ENCODE measurements at regions of chr11 and their contacts with region 1.

Region 1: DNA sequence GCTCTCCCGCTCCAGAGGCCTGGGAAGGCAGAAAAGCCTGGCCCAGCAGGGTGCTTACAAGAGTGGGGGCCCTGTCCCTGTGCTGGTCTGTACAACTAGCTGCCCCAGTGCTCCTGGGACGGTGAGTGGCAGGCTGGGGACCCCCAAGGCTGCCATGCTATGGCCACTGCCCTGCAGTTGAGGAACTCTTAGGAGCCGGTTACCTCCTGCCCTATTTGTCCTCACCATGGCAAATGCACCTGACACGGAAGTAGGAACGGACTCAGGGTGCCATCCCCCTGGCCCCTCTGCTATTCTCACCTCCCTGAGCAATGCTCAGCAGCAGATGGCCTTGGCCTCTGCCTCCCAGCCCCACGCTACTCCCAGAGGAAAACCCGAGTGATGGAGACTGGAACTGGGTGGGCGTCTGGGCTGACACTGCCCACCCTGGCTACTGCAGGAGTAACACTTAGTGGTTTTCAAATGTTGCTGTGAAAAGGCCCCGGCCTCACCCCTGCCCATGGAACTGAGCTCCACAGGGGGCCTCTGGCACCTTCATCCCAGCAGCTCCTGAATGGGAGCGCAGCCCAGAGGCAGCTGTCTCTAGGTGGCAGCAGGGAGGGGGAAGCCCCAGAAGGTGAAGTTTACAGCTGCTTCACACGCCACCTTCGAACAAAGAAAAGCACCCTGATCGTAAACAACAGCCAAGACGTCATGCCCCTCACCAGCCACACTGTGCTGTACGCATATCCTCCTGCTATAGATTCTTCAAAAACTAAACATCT is 105.3 kb downstream of the CTTN start:
- DNase-seq: no peak
- H3K4me3 ChIP-seq: no peak overlapping the region
- H3K27ac ChIP-seq: no peak overlapping the region
- H3K4me1 ChIP-seq: peaks cover 0 to 10% (median 6%) of the 10 kb centered on the region in 4 experiments; a peak in 4 of 7 replicates
- H3K27me3 ChIP-seq: no peaks in the 10 kb centered on the region
- CTCF ChIP-seq: peak in 2 of 3 experiments; percentile 35 to 41; a peak in 3 of 4 replicates
- EP300 ChIP-seq: no peak
- POLR2A ChIP-seq: no peak
- RAD21 ChIP-seq: peak; percentile 37 to 50

Region 2: DNA sequence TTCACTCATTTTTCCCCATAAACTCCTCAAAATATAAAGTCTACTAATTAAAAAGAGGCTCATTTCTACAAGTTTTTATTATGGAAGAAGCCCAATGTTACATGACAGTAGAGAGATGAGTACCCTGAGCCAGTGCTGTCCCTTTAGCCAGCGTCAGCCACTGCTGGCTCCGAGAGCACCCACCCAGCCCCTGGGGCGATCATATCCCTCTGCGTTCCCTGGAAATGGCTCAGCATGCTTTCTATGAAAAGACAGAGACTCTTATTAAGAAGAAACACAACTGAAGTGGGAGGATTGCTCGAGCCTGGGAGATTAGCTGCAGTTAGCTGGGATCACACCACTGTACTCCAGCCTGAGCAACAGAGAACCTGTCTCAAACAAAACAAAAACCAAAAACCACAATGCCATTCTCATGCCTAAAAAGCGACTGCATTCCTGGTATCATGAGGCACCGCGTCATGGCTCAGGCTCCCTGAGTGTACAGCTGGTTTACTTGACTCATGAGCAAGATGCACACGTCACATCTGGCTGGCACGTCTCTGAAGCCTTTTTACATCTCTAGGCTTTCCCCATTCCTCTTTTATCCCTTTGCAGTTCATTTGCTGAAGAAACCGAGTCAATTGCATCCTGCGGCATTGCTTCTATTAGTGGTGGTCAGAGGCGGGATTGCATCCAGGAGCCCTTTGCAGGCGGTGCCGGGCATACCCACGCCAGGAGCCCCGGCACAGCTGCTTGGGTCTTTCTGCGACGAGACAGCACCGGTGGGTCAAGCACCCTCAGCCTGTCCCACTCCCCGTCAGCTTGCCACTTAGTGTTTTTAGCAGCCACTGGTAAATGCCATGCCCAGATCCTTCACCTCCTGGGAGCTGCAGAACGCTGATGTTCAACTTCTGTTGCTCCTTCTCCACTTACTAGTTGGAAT is 14.6 kb after region 1 on chr11:
- CTCF ChIA-PET with region 1: interaction called, 150 read pairs
- POLR2A ChIA-PET with region 1: no interaction called
- DNase-seq: no peak
- H3K4me3 ChIP-seq: no peak overlapping the region
- H3K27ac ChIP-seq: no peak overlapping the region
- H3K4me1 ChIP-seq: peaks cover 0 to 14% (median 8%) of the 10 kb centered on the region in 4 experiments; a peak in 6 of 7 replicates
- H3K27me3 ChIP-seq: no peaks in the 10 kb centered on the region; a peak in 1 of 7 replicates
- CTCF ChIP-seq: peak in 2 of 3 experiments; percentile 11 to 14; a peak in 2 of 4 replicates
- EP300 ChIP-seq: no peak
- POLR2A ChIP-seq: no peak
- RAD21 ChIP-seq: peak in 1 of 2 experiments; percentile 3; a peak in 1 of 4 replicates

Region 3: DNA sequence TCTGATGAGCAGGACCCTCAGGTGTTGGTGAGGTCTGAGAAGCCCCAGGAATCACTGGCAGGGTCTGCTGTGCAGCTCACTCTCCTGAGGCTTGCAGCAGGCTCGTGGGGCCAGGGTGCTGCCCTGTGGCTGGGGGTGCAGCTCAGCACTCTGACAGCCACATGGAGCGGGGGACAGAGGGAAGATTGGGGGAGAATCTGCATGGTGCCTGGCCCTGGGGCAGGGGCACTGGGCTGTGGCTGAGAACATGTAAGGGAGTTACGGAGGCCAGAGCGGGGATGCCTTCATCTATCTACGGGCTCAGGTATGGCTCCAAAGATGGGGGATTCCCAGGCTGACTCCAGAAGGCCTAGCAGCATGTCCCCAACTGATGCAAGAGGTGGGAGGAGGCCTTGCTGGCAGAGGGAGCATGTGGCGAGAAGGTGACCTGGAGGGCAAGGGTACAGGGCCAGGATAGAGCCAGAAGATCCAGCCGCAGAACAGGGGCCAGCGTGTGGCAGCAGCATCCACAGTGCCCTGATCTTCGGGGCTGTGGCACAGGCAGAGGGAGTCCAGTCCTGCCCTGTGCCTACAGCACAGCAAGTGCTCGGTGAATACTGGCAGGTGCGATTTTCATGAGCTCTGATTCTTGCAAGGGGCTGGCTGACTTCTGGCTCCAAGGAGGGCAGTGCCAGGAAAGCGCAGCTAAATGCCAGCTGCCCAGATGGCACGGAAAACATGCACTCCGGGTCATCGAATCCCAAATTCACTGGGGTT is 79.4 kb after region 1 on chr11:
- CTCF ChIA-PET with region 1: no interaction called
- POLR2A ChIA-PET with region 1: no interaction called
- DNase-seq: no peak
- H3K4me3 ChIP-seq: no peak overlapping the region
- H3K27ac ChIP-seq: no peak overlapping the region
- H3K4me1 ChIP-seq: peaks cover 0 to 7% (median 4%) of the 10 kb centered on the region in 4 experiments; a peak in 3 of 7 replicates
- H3K27me3 ChIP-seq: no peaks in the 10 kb centered on the region
- CTCF ChIP-seq: no peak
- EP300 ChIP-seq: no peak
- POLR2A ChIP-seq: no peak
- RAD21 ChIP-seq: no peak